ENCODE measurements at regions of chr22 and their contacts with region 1.

Region 1: DNA sequence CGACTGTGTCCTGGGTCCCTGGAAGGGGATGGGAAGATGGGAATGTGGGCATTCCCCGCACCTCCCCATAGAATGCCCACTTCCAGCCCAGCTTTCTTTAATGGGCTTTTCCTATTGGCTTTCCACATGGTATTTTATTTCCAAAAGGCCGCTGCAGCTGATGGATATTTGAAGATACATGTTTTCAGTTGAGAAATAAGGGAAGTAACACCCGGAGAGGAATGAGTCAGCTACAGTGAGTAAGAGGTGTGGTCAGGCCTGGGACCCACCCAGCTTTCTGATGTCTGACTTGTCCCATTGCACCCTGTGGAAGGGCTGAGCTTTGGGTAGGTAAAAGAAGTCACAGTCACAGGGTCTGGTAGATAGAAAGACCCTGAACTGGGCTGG is 476.9 kb downstream of the MIAT start:
- DNase-seq: peak; percentile 95 to 99 (median 97)
- H3K4me3 ChIP-seq: no peak overlapping the region
- H3K4me3 Mint-ChIP-seq: peak overlapping the region; percentile 27 to 39
- H3K27ac ChIP-seq: peak overlapping the region; percentile 85 to 99
- H3K27ac Mint-ChIP-seq: peak overlapping the region; percentile 95 to 100 (median 99)
- H3K4me1 ChIP-seq: peaks cover 65 to 68% of the 10 kb centered on the region in 2 donors
- H3K4me1 Mint-ChIP-seq: peaks cover 66% of the 10 kb centered on the region
- H3K27me3 ChIP-seq: no peaks in the 10 kb centered on the region
- H3K27me3 Mint-ChIP-seq: peaks cover 0 to 4% (median 1%) of the 10 kb centered on the region in 3 donors
- CTCF ChIP-seq: no peak

Region 2: GRCh38 chr22:27113211-27113635 is 21.1 kb before region 1 on chr22:
- intact Hi-C with region 1: loop called in 1 of 2 experiments (anchors 2 kb)
- DNase-seq: peak; percentile 98 to 99 (median 99)
- H3K4me3 ChIP-seq: peak overlapping the region in 1 of 3 experiments; percentile 35
- H3K4me3 Mint-ChIP-seq: peak overlapping the region; percentile 64 to 74
- H3K27ac ChIP-seq: peak overlapping the region; percentile 80 to 97
- H3K27ac Mint-ChIP-seq: peak overlapping the region; percentile 92 to 99 (median 96)
- H3K4me1 ChIP-seq: peaks cover 21 to 30% of the 10 kb centered on the region in 2 donors
- H3K4me1 Mint-ChIP-seq: peaks cover 27% of the 10 kb centered on the region
- H3K27me3 ChIP-seq: no peaks in the 10 kb centered on the region
- H3K27me3 Mint-ChIP-seq: peaks cover 1 to 7% (median 3%) of the 10 kb centered on the region in 3 donors
- CTCF ChIP-seq: no peak

Region 3: DNA sequence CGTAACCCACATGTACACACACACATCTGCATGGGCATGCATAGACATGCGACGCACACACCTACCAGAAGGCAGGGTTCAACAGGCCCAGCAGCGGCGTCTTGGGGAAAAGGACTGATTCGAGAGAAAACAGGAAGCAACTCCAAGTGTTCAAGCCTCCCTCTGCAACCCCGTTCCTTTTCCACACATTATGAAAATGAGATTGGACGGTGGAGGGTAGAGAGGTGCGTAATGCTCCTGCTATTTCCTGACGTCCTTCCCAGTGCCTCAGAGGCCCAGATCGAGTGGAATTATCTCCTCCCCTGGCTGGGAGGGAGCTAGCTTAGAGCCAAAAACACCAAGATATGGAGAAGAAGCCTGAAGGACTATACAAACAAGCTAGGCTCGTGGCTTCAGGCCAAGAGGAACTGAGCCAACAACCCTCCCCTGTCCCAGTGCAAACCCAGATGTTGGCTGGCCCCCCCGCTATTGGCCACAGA is 378.0 kb after region 1 on chr22:
- intact Hi-C with region 1: no loop called
- DNase-seq: no peak
- H3K4me3 ChIP-seq: no peak overlapping the region
- H3K4me3 Mint-ChIP-seq: peak overlapping the region in 1 of 2 donors; percentile 71
- H3K27ac ChIP-seq: no peak overlapping the region
- H3K27ac Mint-ChIP-seq: no peak overlapping the region
- H3K4me1 ChIP-seq: no peaks in the 10 kb centered on the region
- H3K4me1 Mint-ChIP-seq: peaks cover 7% of the 10 kb centered on the region
- H3K27me3 ChIP-seq: no peaks in the 10 kb centered on the region
- H3K27me3 Mint-ChIP-seq: peaks cover 0 to 5% (median 4%) of the 10 kb centered on the region in 3 donors
- CTCF ChIP-seq: no peak

Measured in CD14-positive monocyte (primary cell).